HCT116 (cell line): ENCODE measurements at regions of chr4 and their contacts with region 1.

Region 1: GRCh38 chr4:15805583-15806517 is 27.7 kb downstream of the CD38 start:
- DNase-seq: peak; percentile 57
- ATAC-seq: peak; percentile 93
- H3K4me3 ChIP-seq: no peak overlapping the region
- H3K27ac ChIP-seq: no peak overlapping the region
- H3K4me1 ChIP-seq: no peaks in the 10 kb centered on the region
- H3K27me3 ChIP-seq: no peaks in the 10 kb centered on the region
- CTCF ChIP-seq: peak; percentile 71 to 90 (median 80)
- POLR2A ChIP-seq: no peak
- RAD21 ChIP-seq: peak; percentile 94

Region 2: GRCh38 chr4:15479089-15479912 is 326.5 kb before region 1 on chr4:
- CTCF ChIA-PET with region 1: interaction called, 32 read pairs
- POLR2A ChIA-PET with region 1: no interaction called
- RAD21 ChIA-PET with region 1: interaction called, 5 to 8 read pairs
- intact Hi-C with region 1: loop called (anchors 1 kb)
- DNase-seq: peak; percentile 82
- ATAC-seq: peak; percentile 87
- H3K4me3 ChIP-seq: peak overlapping the region; percentile 62 to 68
- H3K27ac ChIP-seq: peak overlapping the region; percentile 56
- H3K4me1 ChIP-seq: peaks cover 5 to 11% of the 10 kb centered on the region in 2 experiments
- H3K27me3 ChIP-seq: no peaks in the 10 kb centered on the region
- CTCF ChIP-seq: peak; percentile 64 to 79 (median 74)
- POLR2A ChIP-seq: peak; percentile 70
- RAD21 ChIP-seq: peak; percentile 92

Region 3: DNA sequence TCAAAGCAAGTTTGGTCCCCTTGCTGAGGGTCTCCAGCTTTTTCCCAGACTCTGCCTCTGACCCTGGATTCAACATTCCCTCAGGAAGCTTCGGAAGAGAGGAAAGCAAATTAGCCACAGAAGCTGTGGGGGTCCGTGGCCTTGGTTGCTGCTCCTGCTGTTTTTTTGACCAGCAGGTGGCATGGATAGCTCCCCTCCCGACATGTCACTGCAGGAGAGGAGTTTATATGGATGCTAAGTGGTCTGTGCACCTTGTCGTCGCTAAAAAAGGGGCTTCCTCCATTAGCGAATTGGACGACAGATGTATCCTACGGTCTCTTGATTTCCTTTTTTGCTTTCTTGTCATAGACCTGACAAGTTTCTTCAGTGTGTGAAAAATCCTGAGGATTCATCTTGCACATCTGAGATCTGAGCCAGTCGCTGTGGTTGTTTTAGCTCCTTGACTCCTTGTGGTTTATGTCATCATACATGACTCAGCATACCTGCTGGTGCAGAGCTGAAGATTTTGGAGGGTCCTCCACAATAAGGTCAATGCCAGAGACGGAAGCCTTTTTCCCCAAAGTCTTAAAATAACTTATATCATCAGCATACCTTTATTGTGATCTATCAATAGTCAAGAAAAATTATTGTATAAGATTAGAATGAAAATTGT is 42.5 kb after region 1 on chr4:
- CTCF ChIA-PET with region 1: interaction called, 12 read pairs
- POLR2A ChIA-PET with region 1: no interaction called
- RAD21 ChIA-PET with region 1: interaction called in 1 of 2 experiments, 5 read pairs
- intact Hi-C with region 1: no loop called
- DNase-seq: peak; percentile 10
- ATAC-seq: peak; percentile 73
- H3K4me3 ChIP-seq: no peak overlapping the region
- H3K27ac ChIP-seq: no peak overlapping the region
- H3K4me1 ChIP-seq: peaks cover 0 to 8% of the 10 kb centered on the region in 2 experiments; a peak in 1 of 4 replicates
- H3K27me3 ChIP-seq: no peaks in the 10 kb centered on the region
- CTCF ChIP-seq: peak in 2 of 3 experiments; percentile 44 to 49; a peak in 4 of 6 replicates
- POLR2A ChIP-seq: no peak
- RAD21 ChIP-seq: peak; percentile 23; the same call in 1 of the 2 replicates

Region 4: GRCh38 chr4:15956179-15956850 is 150.5 kb after region 1 on chr4:
- CTCF ChIA-PET with region 1: interaction called, 242 read pairs
- POLR2A ChIA-PET with region 1: interaction called, 5 read pairs
- RAD21 ChIA-PET with region 1: interaction called, 40 to 50 read pairs
- intact Hi-C with region 1: loop called (anchors 1 kb)
- DNase-seq: peak; percentile 78
- ATAC-seq: peak; percentile 96
- H3K4me3 ChIP-seq: no peak overlapping the region
- H3K27ac ChIP-seq: no peak overlapping the region
- H3K4me1 ChIP-seq: peaks cover 0 to 7% of the 10 kb centered on the region in 2 experiments; a peak in 3 of 4 replicates
- H3K27me3 ChIP-seq: no peaks in the 10 kb centered on the region
- CTCF ChIP-seq: peak; percentile 92 to 97 (median 95)
- POLR2A ChIP-seq: no peak
- RAD21 ChIP-seq: peak; percentile 100

Region 5: GRCh38 chr4:16196478-16197393 is 390.9 kb after region 1 on chr4:
- CTCF ChIA-PET with region 1: no interaction called
- POLR2A ChIA-PET with region 1: no interaction called
- RAD21 ChIA-PET with region 1: no interaction called
- intact Hi-C with region 1: loop called (anchors 5 kb)
- DNase-seq: peak; percentile 38
- ATAC-seq: peak; percentile 95
- H3K4me3 ChIP-seq: peak overlapping the region in 1 of 2 experiments; percentile 43; a peak in 2 of 4 replicates
- H3K27ac ChIP-seq: no peak overlapping the region
- H3K4me1 ChIP-seq: peaks cover 7 to 9% of the 10 kb centered on the region in 2 experiments; a peak in 3 of 4 replicates
- H3K27me3 ChIP-seq: no peaks in the 10 kb centered on the region
- CTCF ChIP-seq: peak; percentile 35 to 89 (median 51); a peak in 5 of 6 replicates
- POLR2A ChIP-seq: no peak
- RAD21 ChIP-seq: peak; percentile 53